Right ventricle myocardium superior (tissue), 1 donor: ENCODE measurements at regions of chr6 and their contacts with region 1.

Region 1: GRCh38 chr6:157867155-157867559 is 44.1 kb downstream of the SNX9 start:
- DNase-seq: no peak
- ATAC-seq: no peak

Region 2: DNA sequence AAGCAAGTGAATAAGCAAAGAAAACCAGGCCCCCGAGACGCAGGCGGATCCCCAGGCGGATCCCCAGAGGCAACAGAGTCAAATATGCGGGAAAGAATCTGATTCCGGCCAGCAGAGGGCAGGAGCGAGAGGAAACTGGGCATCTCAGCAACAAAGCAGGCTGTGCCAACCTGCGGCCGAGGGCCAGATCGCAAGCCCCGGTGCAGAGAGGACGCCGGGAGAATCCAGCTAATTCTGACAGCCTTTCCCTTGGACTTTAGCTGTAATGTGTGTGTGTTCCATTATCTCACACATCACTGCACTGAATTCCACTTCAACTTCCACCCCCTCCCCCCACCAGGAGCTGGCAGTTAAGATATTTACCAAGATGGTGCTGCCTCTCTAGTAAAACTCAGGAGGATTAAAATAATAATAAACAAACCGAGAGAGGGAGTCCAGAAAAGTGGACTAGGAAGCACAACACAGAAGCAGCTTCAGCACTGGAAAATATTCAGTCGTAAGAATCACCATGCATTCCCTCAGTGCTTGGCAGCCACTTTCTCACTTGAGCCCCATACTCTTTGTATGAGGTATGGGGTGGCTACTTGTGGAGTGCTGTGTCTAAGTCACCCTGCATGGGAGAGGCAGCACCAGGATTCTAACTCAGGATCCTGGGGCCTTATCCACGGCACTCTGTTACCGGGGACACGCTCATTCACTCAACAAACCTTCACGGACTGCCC is 110.3 kb before region 1 on chr6:
- intact Hi-C with region 1: loop called (anchors 10 kb)
- DNase-seq: peak; percentile 92
- ATAC-seq: peak; percentile 97

Region 3: GRCh38 chr6:158595223-158595622 is 728.1 kb after region 1 on chr6:
- intact Hi-C with region 1: no loop called
- DNase-seq: no peak
- ATAC-seq: no peak